ENCODE measurements at regions of chr1 and their contacts with region 1.

Region 1: DNA sequence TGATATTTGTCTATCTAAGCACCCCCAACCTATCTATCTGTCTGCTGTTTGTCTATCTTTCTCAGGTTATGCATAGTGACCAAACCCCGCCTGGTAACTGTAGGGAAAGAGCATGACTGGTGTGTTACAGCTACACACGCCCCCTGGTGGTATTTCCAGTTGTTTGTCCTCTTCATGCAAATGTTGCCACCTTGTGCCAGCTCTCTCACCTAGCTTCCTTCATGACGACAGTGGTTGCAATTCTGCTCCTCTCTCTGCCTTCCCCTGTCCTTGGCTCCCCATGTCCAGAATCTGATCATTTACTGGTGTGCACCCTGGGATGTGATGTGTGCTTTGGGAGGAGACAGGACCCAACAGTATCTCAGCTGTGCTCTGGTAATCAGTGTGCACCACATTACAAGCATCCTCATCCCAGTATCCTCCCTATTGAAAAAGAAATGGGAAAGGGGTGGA is 8.1 kb upstream of the INKA2 start:
- DNase-seq: peak; percentile 71
- H3K4me3 ChIP-seq: no peak overlapping the region
- H3K27ac ChIP-seq: no peak overlapping the region
- H3K4me1 ChIP-seq: peaks cover 2% of the 10 kb centered on the region
- H3K27me3 ChIP-seq: no peaks in the 10 kb centered on the region
- CTCF ChIP-seq: peak; percentile 82 to 89
- POLR2A ChIP-seq: no peak

Region 2: GRCh38 chr1:111709986-111710385 is 37.3 kb before region 1 on chr1:
- CTCF ChIA-PET with region 1: interaction called, 487 read pairs
- POLR2A ChIA-PET with region 1: interaction called, 5 read pairs
- dilution Hi-C with region 1: no loop called
- intact Hi-C with region 1: loop called (anchors 1 kb)
- DNase-seq: no peak
- H3K4me3 ChIP-seq: no peak overlapping the region
- H3K27ac ChIP-seq: no peak overlapping the region
- H3K4me1 ChIP-seq: no peaks in the 10 kb centered on the region
- H3K27me3 ChIP-seq: no peaks in the 10 kb centered on the region
- CTCF ChIP-seq: no peak
- POLR2A ChIP-seq: no peak

Region 3: GRCh38 chr1:111720977-111721786 is 26.1 kb before region 1 on chr1:
- CTCF ChIA-PET with region 1: interaction called, 487 read pairs
- POLR2A ChIA-PET with region 1: interaction called, 7 read pairs
- dilution Hi-C with region 1: no loop called
- intact Hi-C with region 1: no loop called
- DNase-seq: no peak
- H3K4me3 ChIP-seq: no peak overlapping the region
- H3K27ac ChIP-seq: no peak overlapping the region
- H3K4me1 ChIP-seq: peaks cover 8% of the 10 kb centered on the region
- H3K27me3 ChIP-seq: no peaks in the 10 kb centered on the region
- CTCF ChIP-seq: no peak
- POLR2A ChIP-seq: no peak

Region 4: GRCh38 chr1:111733183-111733991 is 13.9 kb before region 1 on chr1:
- CTCF ChIA-PET with region 1: interaction called, 57 read pairs
- POLR2A ChIA-PET with region 1: no interaction called
- dilution Hi-C with region 1: no loop called
- intact Hi-C with region 1: no loop called
- DNase-seq: peak; percentile 78
- H3K4me3 ChIP-seq: no peak overlapping the region
- H3K27ac ChIP-seq: peak overlapping the region; percentile 89
- H3K4me1 ChIP-seq: peaks cover 36% of the 10 kb centered on the region
- H3K27me3 ChIP-seq: no peaks in the 10 kb centered on the region
- CTCF ChIP-seq: no peak
- POLR2A ChIP-seq: peak; percentile 41

Region 5: DNA sequence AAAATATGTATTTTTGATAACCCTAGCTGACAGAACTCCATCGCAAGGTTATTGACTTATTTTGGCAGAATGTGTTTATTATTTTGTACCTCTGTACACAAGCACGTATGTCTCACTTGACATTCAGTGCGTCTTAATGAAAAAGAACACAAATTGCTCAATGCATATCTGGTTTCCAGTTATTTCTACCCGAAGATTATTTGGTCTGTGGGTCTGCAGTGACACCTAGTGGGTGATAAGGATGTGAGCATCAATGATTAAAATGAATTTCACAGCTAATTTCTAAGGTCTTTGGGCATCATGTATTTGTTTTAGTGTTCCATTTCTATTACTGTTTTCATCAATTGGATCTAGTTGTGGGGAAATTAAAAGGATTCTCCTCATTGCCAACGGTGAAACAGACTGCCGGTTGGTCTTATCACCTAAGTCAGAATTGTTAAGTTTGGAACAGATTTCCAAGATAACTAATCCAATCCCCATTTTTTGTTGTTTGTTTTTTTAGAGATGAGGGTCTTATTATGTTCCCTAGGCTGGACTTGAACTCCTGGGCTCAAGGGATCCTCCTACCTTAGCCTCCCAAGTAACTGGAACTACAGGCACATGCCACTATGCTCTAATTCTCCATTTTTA is 22.3 kb after region 1 on chr1:
- CTCF ChIA-PET with region 1: interaction called, 13 read pairs
- POLR2A ChIA-PET with region 1: interaction called, 3 read pairs
- dilution Hi-C with region 1: no loop called
- intact Hi-C with region 1: no loop called
- DNase-seq: peak; percentile 70
- H3K4me3 ChIP-seq: no peak overlapping the region
- H3K27ac ChIP-seq: no peak overlapping the region
- H3K4me1 ChIP-seq: no peaks in the 10 kb centered on the region
- H3K27me3 ChIP-seq: no peaks in the 10 kb centered on the region
- CTCF ChIP-seq: peak; percentile 51 to 62
- POLR2A ChIP-seq: peak; percentile 18

Region 6: GRCh38 chr1:111856411-111857185 is 109.3 kb after region 1 on chr1:
- CTCF ChIA-PET with region 1: no interaction called
- POLR2A ChIA-PET with region 1: no interaction called
- dilution Hi-C with region 1: no loop called
- intact Hi-C with region 1: no loop called
- DNase-seq: no peak
- H3K4me3 ChIP-seq: no peak overlapping the region
- H3K27ac ChIP-seq: no peak overlapping the region
- H3K4me1 ChIP-seq: no peaks in the 10 kb centered on the region
- H3K27me3 ChIP-seq: no peaks in the 10 kb centered on the region
- CTCF ChIP-seq: no peak
- POLR2A ChIP-seq: no peak

Region 7: DNA sequence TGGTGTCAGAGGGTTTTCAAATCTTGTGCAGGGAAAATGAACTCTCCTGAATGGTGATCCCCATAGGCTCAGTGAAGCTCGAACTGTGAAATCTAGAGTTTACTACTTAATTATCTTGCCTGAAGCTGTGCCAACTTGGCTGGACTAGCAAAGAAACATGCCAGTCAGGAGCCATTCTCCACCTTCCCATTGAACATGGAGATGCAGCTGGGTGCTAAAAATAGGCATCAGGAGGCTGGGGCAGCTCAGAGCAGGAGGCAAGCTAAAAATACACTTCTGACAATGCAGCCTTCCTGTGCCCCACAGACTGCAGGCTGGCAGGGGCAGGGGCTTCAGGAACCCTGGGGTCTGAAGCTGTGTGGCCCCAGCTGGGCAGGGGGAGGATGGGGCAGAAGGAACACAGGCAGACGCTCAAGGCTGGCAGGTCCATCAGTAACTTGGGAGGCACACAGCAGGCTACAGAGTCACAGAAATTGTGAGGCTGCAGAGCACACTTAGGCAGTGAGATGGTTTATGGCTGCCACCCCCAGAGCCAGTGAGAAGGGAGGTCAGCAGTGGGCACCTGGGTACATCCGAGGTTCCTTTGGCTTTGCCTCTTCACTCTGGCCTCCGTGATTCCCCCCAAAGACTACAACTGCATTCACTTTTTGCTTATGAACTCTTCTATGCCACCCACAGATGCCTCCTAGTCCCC is 397.6 kb after region 1 on chr1:
- CTCF ChIA-PET with region 1: no interaction called
- POLR2A ChIA-PET with region 1: no interaction called
- dilution Hi-C with region 1: no loop called
- intact Hi-C with region 1: no loop called
- DNase-seq: no peak
- H3K4me3 ChIP-seq: no peak overlapping the region
- H3K27ac ChIP-seq: no peak overlapping the region
- H3K4me1 ChIP-seq: no peaks in the 10 kb centered on the region
- H3K27me3 ChIP-seq: no peaks in the 10 kb centered on the region
- CTCF ChIP-seq: no peak
- POLR2A ChIP-seq: no peak

Region 8: DNA sequence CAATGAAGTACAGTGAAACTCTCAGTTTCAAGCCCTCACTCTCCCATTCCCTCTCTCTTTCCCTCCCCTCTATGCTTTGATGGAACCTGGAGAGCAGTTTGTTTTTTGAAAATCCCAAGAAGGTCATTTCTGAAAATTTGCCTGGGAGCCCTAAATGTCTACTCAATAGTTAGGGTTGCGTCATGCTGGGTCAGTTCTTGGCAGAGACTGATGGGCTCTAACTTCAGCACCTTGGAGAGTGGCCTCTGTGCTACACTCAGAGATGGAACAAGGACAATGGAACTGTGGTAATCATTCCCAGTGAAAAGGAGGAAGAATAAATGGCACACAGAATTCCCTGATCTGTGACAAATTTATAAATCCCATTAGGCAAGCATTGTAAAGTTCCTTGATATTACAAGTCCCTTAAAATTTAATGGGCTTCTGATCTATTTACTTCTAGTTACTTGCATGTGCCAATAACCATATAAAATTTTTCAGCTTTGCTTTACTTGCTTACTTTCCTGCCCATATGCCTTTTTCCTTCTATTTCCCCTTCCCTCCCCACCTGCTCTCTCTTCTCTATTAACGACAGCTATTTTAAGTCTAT is 425.1 kb after region 1 on chr1:
- CTCF ChIA-PET with region 1: no interaction called
- POLR2A ChIA-PET with region 1: no interaction called
- dilution Hi-C with region 1: no loop called
- intact Hi-C with region 1: no loop called
- DNase-seq: peak; percentile 35
- H3K4me3 ChIP-seq: no peak overlapping the region
- H3K27ac ChIP-seq: no peak overlapping the region
- H3K4me1 ChIP-seq: no peaks in the 10 kb centered on the region
- H3K27me3 ChIP-seq: no peaks in the 10 kb centered on the region
- CTCF ChIP-seq: no peak
- POLR2A ChIP-seq: no peak

Measured in endothelial cell of umbilical vein (primary cell).